ENCODE measurements at regions of chr13 and their contacts with region 1.

Region 1: GRCh38 chr13:31035185-31035965 is 102.9 kb downstream of the TEX26 start:
- DNase-seq: peak in 1 of 3 donors; percentile 17
- ATAC-seq: no peak
- H3K4me3 ChIP-seq: no peak overlapping the region
- H3K4me1 ChIP-seq: no peaks in the 10 kb centered on the region
- CTCF ChIP-seq: no peak

Region 2: GRCh38 chr13:30991922-30992321 is 43.5 kb before region 1 on chr13:
- intact Hi-C with region 1: loop called in 1 of 2 experiments (anchors 2 kb)
- DNase-seq: no peak
- ATAC-seq: no peak
- H3K4me3 ChIP-seq: no peak overlapping the region
- H3K4me1 ChIP-seq: no peaks in the 10 kb centered on the region
- CTCF ChIP-seq: no peak